Left cardiac atrium (tissue), 4 donors: ENCODE measurements at regions of chr22 and their contacts with region 1.

Region 1: GRCh38 chr22:32474635-32475467 is at the start of gene FBXO7:
- DNase-seq: peak; percentile 96
- ATAC-seq: peak; percentile 94
- total RNA-seq, gene FBXO7: 40.0 to 48.4 TPM

Region 2: DNA sequence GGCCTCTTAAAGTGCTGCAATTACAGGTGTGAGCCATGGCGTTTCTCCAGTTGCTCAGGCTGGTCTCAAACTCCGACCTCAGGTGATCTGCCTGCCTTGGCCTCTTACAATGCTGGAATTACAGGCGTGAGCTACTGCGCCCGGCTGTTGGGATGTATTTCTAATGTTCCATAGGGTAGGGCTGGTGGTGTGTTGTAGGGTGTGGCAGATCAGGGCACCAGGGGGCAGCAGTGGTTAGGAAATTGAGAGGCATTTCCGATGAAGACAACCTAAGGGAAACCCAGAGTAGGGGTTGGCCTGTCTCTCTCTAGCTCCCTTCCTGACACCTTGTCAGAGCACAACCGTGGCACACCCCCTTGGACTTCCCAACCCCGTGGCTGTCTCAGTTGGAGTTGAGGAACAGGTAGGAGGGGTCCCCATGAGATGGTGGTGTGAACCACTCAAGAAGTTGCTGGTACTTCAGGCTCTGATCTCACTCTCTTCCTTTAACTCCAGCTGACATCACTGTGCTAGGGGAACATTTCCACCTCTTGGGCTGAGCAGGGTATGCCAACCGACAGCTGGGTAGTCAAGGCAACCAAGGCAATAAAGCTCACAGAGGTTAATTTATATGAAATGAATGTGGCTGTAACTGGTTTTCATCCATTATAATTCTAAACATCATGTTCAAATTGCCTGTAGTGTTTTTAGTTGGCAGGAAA is 497.6 kb before region 1 on chr22:
- intact Hi-C with region 1: loop called in 1 of 2 experiments (anchors 5 kb)
- DNase-seq: peak; percentile 75
- ATAC-seq: peak; percentile 88 to 90

Region 3: GRCh38 chr22:32202539-32203180 is 272.2 kb before region 1 on chr22:
- intact Hi-C with region 1: loop called in 1 of 2 experiments (anchors 5 kb)
- DNase-seq: no peak
- ATAC-seq: peak; percentile 45 to 48

Region 4: GRCh38 chr22:32389685-32390084 is 85.2 kb before region 1 on chr22:
- intact Hi-C with region 1: no loop called
- DNase-seq: no peak
- ATAC-seq: peak in 1 of 2 donors; percentile 34

Region 5: GRCh38 chr22:32411829-32412592 is 62.8 kb before region 1 on chr22 and contains the start of gene RTCB:
- intact Hi-C with region 1: loop called in 1 of 2 experiments (anchors 5 kb)
- DNase-seq: peak; percentile 94
- ATAC-seq: peak; percentile 94 to 96
- total RNA-seq, gene RTCB: 40.6 to 50.3 TPM